Gastrocnemius medialis (tissue), 4 donors: ENCODE measurements at regions of chrX and their contacts with region 1.

Region 1: DNA sequence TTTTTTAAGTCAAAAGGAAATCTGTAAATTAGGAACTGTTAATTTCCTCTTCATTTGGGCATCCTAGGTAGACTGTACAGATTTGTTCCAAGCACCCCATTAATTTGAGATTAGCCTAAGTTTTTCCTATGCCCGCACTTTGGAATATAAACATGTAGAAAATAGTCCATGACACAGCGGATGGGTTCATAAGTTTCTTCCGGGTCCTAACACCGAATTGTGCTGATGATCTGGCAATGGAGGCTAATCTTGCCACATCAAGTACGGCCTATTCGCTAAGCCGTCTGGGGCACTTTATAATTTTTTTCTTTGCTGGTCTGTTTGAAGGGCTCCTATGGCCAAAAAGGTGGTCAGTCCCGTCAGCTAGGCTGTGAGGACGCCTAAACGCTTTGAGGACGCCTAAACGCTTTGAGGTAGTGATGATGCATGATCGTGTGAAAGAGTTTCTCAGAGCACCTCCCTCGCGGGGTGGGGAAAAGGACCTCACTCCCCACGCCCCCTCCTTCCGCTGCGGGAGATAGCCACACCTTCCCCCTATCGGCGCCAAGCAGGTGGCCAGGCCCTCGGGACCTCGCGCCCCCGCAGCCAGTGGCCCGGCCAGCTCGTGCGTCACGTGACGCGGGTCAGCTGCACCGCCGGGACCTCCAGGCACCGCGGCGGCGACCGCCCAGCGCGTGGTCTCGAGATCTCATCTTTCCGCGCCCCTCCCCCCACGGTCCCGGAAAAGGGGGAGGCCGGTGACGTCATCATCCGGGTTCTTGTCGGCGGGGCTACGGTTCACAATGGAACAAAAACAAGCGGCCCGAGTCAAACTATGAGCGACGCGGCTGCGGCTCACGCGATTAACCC is 977 bp upstream of the USP9X start:
- DNase-seq: peak; percentile 91 to 97
- ATAC-seq: peak; percentile 73 to 76
- H3K4me3 ChIP-seq: peak overlapping the region; percentile 72 to 93 (median 86)
- H3K27ac ChIP-seq: peak overlapping the region; percentile 91 to 100 (median 96)
- H3K4me1 ChIP-seq: peaks cover 10 to 27% of the 10 kb centered on the region in 2 donors
- H3K27me3 ChIP-seq: no peaks in the 10 kb centered on the region
- CTCF ChIP-seq: peak in 2 of 5 experiments; percentile 48 to 52
- POLR2A ChIP-seq: peak; percentile 90 to 91

Region 2: GRCh38 chrX:40694802-40695201 is 389.5 kb before region 1 on chrX:
- in situ Hi-C with region 1: no loop called
- intact Hi-C with region 1: loop called (anchors 5 kb)
- DNase-seq: no peak
- ATAC-seq: no peak
- H3K4me3 ChIP-seq: no peak overlapping the region
- H3K27ac ChIP-seq: peak overlapping the region in 1 of 4 donors; percentile 18
- H3K4me1 ChIP-seq: peaks cover 5% of the 10 kb centered on the region in 2 donors
- H3K27me3 ChIP-seq: no peaks in the 10 kb centered on the region
- CTCF ChIP-seq: no peak
- POLR2A ChIP-seq: no peak

Region 3: GRCh38 chrX:40735325-40736169 is 348.7 kb before region 1 on chrX and contains the start of gene MED14:
- in situ Hi-C with region 1: no loop called
- intact Hi-C with region 1: loop called (anchors 2 kb)
- DNase-seq: peak; percentile 71 to 85
- ATAC-seq: peak; percentile 90 to 94
- H3K4me3 ChIP-seq: peak within 1 kb of the TSS; percentile 65 to 90 (median 78)
- H3K27ac ChIP-seq: peak within 1 kb of the TSS; percentile 90 to 98 (median 94)
- H3K4me1 ChIP-seq: peaks cover 28 to 36% of the 10 kb centered on the region in 2 donors
- H3K27me3 ChIP-seq: no peaks in the 10 kb centered on the region
- CTCF ChIP-seq: peak; percentile 42 to 76 (median 66)
- POLR2A ChIP-seq: peak; percentile 77 to 82
- total RNA-seq, gene MED14: 19.8 to 27.0 (median 24.0) TPM

Region 4: GRCh38 chrX:40945361-40945713 is 138.9 kb before region 1 on chrX:
- in situ Hi-C with region 1: no loop called
- intact Hi-C with region 1: loop called (anchors 2 kb)
- DNase-seq: peak; percentile 72 to 80
- ATAC-seq: peak; percentile 98 to 99
- H3K4me3 ChIP-seq: no peak overlapping the region
- H3K27ac ChIP-seq: peak overlapping the region; percentile 77 to 86 (median 81)
- H3K4me1 ChIP-seq: peaks cover 0 to 5% of the 10 kb centered on the region in 2 donors
- H3K27me3 ChIP-seq: no peaks in the 10 kb centered on the region
- CTCF ChIP-seq: no peak
- POLR2A ChIP-seq: peak in 1 of 2 donors; percentile 10

Region 5: DNA sequence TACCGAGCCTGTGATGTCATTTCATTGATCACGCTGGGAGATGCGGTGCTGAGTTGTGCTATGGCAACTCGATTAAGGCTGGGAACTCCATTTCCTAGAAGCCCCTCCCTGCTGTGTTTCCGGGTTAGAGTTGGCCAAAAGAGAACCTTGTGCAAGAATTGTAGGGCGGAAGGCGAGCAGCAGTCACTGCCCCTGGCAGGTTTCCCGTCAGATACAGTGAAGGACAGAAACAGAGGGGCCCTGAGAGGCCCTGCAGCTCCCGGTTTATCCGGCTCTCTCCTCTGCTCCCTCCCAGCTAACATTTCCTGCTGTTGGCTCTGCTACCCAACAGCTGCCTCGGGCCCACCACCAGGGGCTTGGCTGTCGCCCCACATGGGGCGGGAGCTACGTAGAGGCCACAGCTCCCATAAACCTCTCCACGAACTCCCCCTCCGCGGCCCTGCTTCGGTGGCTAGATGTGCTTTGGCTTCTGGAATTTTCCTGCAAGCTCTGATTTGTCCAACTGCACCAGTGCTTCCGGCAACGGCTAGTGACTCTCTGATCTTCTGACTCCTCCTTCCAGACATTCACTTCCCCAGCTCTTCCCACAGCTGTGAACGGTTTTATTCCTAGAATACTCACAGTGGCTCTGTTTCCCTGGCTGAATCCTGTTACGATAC is 74.0 kb before region 1 on chrX:
- in situ Hi-C with region 1: no loop called
- intact Hi-C with region 1: loop called (anchors 1 kb)
- DNase-seq: peak; percentile 44 to 73
- ATAC-seq: peak; percentile 93 to 96
- H3K4me3 ChIP-seq: peak overlapping the region; percentile 44 to 61 (median 48)
- H3K27ac ChIP-seq: peak overlapping the region; percentile 60 to 90 (median 82)
- H3K4me1 ChIP-seq: peaks cover 0 to 9% of the 10 kb centered on the region in 2 donors
- H3K27me3 ChIP-seq: peaks cover 0 to 2% (median 0%) of the 10 kb centered on the region in 3 donors
- CTCF ChIP-seq: no peak
- POLR2A ChIP-seq: peak; percentile 33 to 35

Region 6: GRCh38 chrX:41110801-41111625 is 26.7 kb after region 1 on chrX:
- in situ Hi-C with region 1: no loop called
- intact Hi-C with region 1: loop called (anchors 2 kb)
- DNase-seq: no peak
- ATAC-seq: no peak
- H3K4me3 ChIP-seq: no peak overlapping the region
- H3K27ac ChIP-seq: peak overlapping the region; percentile 45 to 73 (median 70)
- H3K4me1 ChIP-seq: peaks cover 51 to 73% of the 10 kb centered on the region in 2 donors
- H3K27me3 ChIP-seq: no peaks in the 10 kb centered on the region
- CTCF ChIP-seq: no peak
- POLR2A ChIP-seq: no peak

Region 7: GRCh38 chrX:41236629-41237028 is 152.4 kb after region 1 on chrX:
- in situ Hi-C with region 1: no loop called
- intact Hi-C with region 1: no loop called
- DNase-seq: no peak
- ATAC-seq: no peak
- H3K4me3 ChIP-seq: no peak overlapping the region
- H3K27ac ChIP-seq: no peak overlapping the region
- H3K4me1 ChIP-seq: no peaks in the 10 kb centered on the region
- H3K27me3 ChIP-seq: no peaks in the 10 kb centered on the region
- CTCF ChIP-seq: no peak
- POLR2A ChIP-seq: no peak

Region 8: GRCh38 chrX:41333744-41334259 is 249.5 kb after region 1 on chrX and contains the start of gene DDX3X:
- in situ Hi-C with region 1: no loop called
- intact Hi-C with region 1: loop called (anchors 2 kb)
- DNase-seq: peak; percentile 62 to 80
- ATAC-seq: peak; percentile 76 to 79
- H3K4me3 ChIP-seq: peak within 1 kb of the TSS; percentile 73 to 96 (median 84)
- H3K27ac ChIP-seq: peak within 1 kb of the TSS; percentile 93 to 99 (median 98)
- H3K4me1 ChIP-seq: peaks cover 11 to 32% of the 10 kb centered on the region in 2 donors
- H3K27me3 ChIP-seq: no peaks in the 10 kb centered on the region
- CTCF ChIP-seq: peak in 4 of 5 experiments; percentile 5 to 51 (median 42)
- POLR2A ChIP-seq: peak; percentile 99
- total RNA-seq, gene DDX3X: 196 to 331 (median 272) TPM